Activated CD4-positive, alpha-beta T cell treated with anti-CD3 and anti-CD28 coated beads for 36 hours (primary cell): ENCODE measurements at regions of chr9 and their contacts with region 1.

Region 1: DNA sequence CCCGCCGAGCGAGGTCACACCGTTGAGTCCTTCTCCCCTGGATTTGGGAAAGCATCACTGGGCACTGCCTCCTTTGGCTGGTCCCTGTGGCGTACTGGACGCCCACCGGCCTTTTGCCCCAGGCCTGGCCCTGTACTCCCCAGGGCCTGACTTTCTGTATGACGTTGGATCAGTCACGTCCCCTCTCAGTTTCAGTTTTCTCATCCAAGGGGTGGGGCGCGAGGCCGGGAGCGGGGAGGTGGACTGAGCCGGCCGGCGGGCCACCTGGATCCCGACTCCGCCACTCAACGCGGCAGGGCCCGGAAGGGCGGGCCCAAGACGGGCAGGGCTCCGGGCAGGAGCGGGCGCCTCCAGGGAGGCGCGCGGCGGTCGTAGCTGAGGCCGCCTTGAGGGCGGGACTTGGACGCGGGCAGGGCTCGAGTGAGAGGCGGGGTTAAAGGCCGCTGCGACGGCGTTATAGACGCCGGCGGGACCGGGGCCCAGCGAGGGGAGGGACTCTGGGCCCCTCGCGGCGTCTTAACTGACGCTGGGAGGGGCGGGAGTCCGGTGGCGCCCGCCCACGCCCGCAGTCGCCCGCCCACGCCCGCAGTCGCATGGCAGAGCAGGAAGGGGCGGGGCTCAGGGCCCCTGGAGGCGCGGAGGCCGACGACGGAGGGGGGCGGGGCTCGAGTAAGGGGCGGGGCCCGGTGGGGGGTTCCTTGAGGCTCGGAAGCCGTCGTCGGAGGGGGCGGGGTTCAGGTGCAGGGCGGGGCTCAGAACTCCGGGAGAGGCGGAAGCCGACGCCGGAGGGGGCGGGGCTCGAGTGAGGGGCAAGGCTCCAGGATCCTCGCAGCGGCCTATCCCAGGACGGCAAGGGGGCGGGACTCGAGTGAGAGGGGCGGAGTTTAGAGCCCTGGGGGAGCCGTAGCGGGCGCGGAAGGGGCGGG is 549 bp upstream of the CARD19 start:
- DNase-seq: peak; percentile 100
- ATAC-seq: peak; percentile 79
- H3K4me3 Mint-ChIP-seq: peak overlapping the region; percentile 80
- H3K27ac Mint-ChIP-seq: peak overlapping the region; percentile 98
- H3K4me1 Mint-ChIP-seq: peaks cover 77% of the 10 kb centered on the region
- H3K27me3 Mint-ChIP-seq: no peaks in the 10 kb centered on the region

Region 2: DNA sequence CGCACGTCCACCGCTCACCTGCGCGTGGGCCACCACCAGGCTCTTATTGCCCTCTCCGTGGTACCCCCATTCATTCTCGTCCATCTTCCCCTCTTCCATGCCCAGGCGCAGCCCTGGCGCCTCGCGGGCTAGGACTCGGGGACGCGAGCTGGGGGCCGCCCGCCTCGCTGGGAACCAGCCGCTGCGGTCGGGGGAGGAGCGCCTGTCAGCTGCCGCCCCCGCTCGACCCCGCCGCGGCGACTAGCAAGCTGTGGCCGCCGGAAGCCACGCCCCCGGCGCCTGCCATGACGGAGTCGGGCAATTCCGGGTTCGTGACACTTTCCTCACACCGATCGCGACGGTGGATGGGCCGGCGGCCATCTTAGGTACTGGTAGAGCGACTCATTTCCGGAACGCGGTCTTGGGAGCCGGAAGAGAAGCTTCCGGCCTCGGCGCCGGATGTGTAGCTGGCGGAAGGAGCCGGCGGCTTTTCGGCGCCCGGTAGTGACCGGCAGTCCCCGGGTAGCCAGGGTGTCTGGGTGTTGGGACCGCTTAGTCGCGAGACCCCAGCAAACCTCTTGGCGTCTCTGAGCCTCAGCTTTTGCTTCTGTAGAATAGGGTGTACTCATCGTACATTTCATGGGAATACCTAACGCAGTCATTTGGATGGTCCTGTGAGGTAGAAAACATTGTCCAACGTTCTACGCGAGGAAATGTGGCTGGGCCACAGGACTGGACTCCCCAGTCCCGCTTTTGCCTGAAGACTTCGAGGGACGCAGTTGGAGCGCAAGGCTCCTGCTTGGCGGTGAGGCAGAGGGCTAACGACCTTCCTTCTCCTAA is 425.4 kb before region 1 on chr9 and contains the start of gene IPPK:
- CTCF ChIA-PET with region 1: no interaction called
- POLR2A ChIA-PET with region 1: no interaction called
- intact Hi-C with region 1: loop called in 1 of 2 experiments (anchors 1 kb)
- DNase-seq: peak; percentile 99
- ATAC-seq: peak; percentile 94
- H3K4me3 Mint-ChIP-seq: peak within 1 kb of the TSS; percentile 96
- H3K27ac Mint-ChIP-seq: peak within 1 kb of the TSS; percentile 93
- H3K4me1 Mint-ChIP-seq: peaks cover 33% of the 10 kb centered on the region
- H3K27me3 Mint-ChIP-seq: no peaks in the 10 kb centered on the region
- total RNA-seq, gene IPPK: 9.9 to 12.2 TPM

Region 3: GRCh38 chr9:92716557-92716956 is 378.9 kb before region 1 on chr9:
- CTCF ChIA-PET with region 1: no interaction called
- POLR2A ChIA-PET with region 1: no interaction called
- intact Hi-C with region 1: no loop called
- DNase-seq: peak; percentile 88
- ATAC-seq: peak; percentile 71
- H3K4me3 Mint-ChIP-seq: no peak overlapping the region
- H3K27ac Mint-ChIP-seq: peak overlapping the region; percentile 42
- H3K4me1 Mint-ChIP-seq: peaks cover 19% of the 10 kb centered on the region
- H3K27me3 Mint-ChIP-seq: no peaks in the 10 kb centered on the region

Region 4: GRCh38 chr9:92829420-92829819 is 266.0 kb before region 1 on chr9:
- CTCF ChIA-PET with region 1: no interaction called
- POLR2A ChIA-PET with region 1: no interaction called
- intact Hi-C with region 1: no loop called
- DNase-seq: no peak
- ATAC-seq: no peak
- H3K4me3 Mint-ChIP-seq: no peak overlapping the region
- H3K27ac Mint-ChIP-seq: no peak overlapping the region
- H3K4me1 Mint-ChIP-seq: no peaks in the 10 kb centered on the region
- H3K27me3 Mint-ChIP-seq: no peaks in the 10 kb centered on the region

Region 5: DNA sequence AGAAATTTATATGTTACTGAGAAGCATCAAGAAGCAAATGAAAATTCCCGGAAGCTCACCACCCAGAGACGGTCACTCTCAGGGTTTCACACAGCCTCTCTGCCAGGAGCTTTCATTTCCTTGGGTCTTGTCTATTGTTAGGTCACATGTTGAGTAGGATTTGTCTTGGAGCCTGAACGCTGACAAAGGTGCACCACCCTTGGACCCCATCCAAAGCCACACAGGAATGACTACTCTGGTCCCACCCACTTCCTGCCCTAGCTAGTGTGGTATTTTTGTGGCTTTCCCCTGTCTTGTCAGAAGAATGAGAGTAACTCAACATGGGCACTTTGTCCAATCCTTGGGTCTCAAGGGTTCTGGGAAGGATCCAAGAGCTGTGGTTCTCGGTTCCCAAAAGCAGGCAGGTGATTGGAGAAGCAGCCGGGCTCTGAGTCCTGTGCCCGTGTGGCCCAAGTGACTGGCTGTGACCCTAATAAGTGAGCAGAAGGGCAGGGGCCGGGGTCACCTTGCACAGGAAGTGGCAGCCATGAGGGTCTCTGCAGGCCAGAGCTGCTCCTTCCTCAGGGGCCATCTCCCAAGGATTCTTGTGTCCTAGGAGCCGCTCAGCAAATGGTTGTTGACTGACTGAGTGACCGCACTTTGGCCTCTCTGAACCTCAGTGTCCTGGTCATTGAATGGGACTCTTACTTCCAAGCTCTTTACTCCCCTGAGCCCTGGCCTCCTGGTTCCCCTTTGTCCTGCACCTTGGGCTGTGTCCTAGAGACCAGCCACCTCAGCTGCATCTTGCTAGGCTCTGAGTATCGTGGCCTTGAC is 141.2 kb before region 1 on chr9:
- CTCF ChIA-PET with region 1: interaction called, 4 read pairs
- POLR2A ChIA-PET with region 1: no interaction called
- intact Hi-C with region 1: loop called in 1 of 2 experiments (anchors 2 kb)
- DNase-seq: peak; percentile 89
- ATAC-seq: peak; percentile 85
- H3K4me3 Mint-ChIP-seq: peak overlapping the region; percentile 66
- H3K27ac Mint-ChIP-seq: peak overlapping the region; percentile 97
- H3K4me1 Mint-ChIP-seq: peaks cover 78% of the 10 kb centered on the region
- H3K27me3 Mint-ChIP-seq: no peaks in the 10 kb centered on the region

Region 6: GRCh38 chr9:93058355-93059096 is 36.9 kb before region 1 on chr9 and contains the start of gene SUSD3:
- CTCF ChIA-PET with region 1: interaction called, 3 read pairs
- POLR2A ChIA-PET with region 1: interaction called, 11 read pairs
- intact Hi-C with region 1: loop called (anchors 1 kb)
- DNase-seq: peak; percentile 86
- ATAC-seq: peak; percentile 66
- H3K4me3 Mint-ChIP-seq: peak within 1 kb of the TSS; percentile 90
- H3K27ac Mint-ChIP-seq: peak within 1 kb of the TSS; percentile 98
- H3K4me1 Mint-ChIP-seq: peaks cover 55% of the 10 kb centered on the region
- H3K27me3 Mint-ChIP-seq: no peaks in the 10 kb centered on the region
- total RNA-seq, gene SUSD3: 51.4 to 57.9 TPM

Region 7: DNA sequence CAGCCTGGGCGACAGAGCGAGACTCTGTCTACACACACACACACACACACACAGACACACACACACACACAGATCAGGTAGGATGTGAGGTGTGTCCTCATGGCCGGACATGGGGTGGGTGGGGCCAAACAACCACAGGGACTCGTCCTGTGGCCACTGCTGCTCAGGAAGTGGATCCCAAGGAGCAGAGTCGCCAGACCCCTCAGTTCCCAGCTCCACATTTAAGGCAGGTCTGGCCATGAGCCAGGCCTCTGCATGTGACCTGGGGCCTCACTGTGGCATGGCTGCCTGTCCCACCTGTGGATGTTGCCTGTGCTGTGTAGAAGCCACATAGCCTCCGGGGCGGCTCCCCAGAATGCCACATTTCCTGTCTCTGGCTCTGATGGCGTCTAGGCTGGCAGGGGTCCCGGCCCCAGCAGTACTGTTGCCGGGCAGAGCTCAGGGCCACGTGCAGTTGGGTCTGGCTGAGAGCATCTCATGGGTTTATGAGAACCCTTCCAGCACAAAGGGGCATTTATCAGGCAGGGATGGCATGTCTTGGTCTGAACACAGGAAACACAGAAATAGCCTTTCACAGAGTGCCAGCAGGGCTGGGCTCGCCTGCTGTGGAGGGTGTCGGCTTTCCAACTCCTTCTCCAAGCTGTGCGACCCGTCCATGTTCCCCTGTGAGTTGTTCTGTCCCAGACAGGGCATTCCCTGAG is 48.5 kb after region 1 on chr9:
- CTCF ChIA-PET with region 1: no interaction called
- POLR2A ChIA-PET with region 1: no interaction called
- intact Hi-C with region 1: loop called in 1 of 2 experiments (anchors 5 kb)
- DNase-seq: peak; percentile 60
- ATAC-seq: peak; percentile 57
- H3K4me3 Mint-ChIP-seq: no peak overlapping the region
- H3K27ac Mint-ChIP-seq: peak overlapping the region; percentile 91
- H3K4me1 Mint-ChIP-seq: peaks cover 64% of the 10 kb centered on the region
- H3K27me3 Mint-ChIP-seq: no peaks in the 10 kb centered on the region